Panc1 (cell line): ENCODE measurements at regions of chr1 and their contacts with region 1.

Region 1: GRCh38 chr1:225777583-225778336 is at the start of gene SRP9:
- DNase-seq: peak; percentile 96
- ATAC-seq: peak; percentile 100
- H3K4me3 ChIP-seq: peak within 1 kb of the TSS; percentile 92 to 98
- H3K27ac ChIP-seq: peak within 1 kb of the TSS; percentile 97
- H3K4me1 ChIP-seq: peaks cover 29% of the 10 kb centered on the region
- H3K27me3 ChIP-seq: no peaks in the 10 kb centered on the region
- CTCF ChIP-seq: peak; percentile 97
- total RNA-seq, gene SRP9: 282 TPM

Region 2: GRCh38 chr1:225554216-225554812 is 223.4 kb before region 1 on chr1:
- CTCF ChIA-PET with region 1: interaction called, 3 read pairs
- POLR2A ChIA-PET with region 1: no interaction called
- in situ Hi-C with region 1: loop called (anchors 10 kb)
- intact Hi-C with region 1: loop called (anchors 1 kb)
- DNase-seq: no peak
- ATAC-seq: no peak
- H3K4me3 ChIP-seq: no peak overlapping the region
- H3K27ac ChIP-seq: no peak overlapping the region
- H3K4me1 ChIP-seq: no peaks in the 10 kb centered on the region
- H3K27me3 ChIP-seq: no peaks in the 10 kb centered on the region
- CTCF ChIP-seq: peak; percentile 64; the same call in 1 of the 2 replicates

Region 3: DNA sequence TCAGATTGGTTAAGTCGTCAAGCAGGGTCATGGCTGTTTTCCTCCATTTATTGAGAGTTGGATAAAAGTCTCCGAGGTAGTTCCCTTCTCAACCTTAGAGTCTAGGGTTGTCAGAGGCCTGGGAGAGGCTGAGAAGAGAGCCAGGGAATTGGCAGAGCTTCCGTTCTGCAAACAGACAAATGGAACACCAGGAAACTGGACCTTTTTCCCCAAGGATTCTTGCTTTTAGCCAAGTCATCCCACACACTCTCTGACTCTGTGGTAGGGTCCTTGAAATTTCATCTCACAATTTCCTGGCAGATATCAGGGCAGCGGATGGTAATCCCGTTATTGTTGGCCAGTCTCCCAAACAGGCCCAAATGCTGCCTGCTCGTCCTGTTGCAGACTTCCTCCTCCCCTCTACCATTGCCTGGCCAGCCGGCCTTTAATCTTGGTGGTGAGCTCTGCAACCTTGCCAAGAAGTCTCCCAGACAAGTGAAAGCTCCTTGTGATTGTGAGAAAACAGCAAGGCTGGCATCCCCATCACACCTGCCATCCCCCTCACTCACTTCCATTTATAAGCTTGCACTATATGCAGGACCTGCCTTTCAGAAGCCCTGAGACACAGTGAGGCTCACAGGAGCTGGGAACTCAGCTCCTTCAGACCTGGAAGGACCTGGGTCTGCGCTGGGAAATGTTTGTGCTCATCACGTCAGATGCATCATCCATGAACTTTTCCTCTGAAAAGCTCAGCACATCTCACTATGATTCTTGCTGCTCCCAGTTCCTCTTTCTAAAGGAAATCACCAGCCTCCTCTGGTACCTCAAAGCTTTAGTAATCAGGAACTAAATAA is 13.8 kb before region 1 on chr1:
- CTCF ChIA-PET with region 1: no interaction called
- POLR2A ChIA-PET with region 1: interaction called, 12 read pairs
- in situ Hi-C with region 1: no loop called
- intact Hi-C with region 1: no loop called
- DNase-seq: no peak
- ATAC-seq: peak; percentile 27; the same call in 1 of the 2 replicates
- H3K4me3 ChIP-seq: no peak overlapping the region
- H3K27ac ChIP-seq: no peak overlapping the region
- H3K4me1 ChIP-seq: peaks cover 21% of the 10 kb centered on the region
- H3K27me3 ChIP-seq: no peaks in the 10 kb centered on the region
- CTCF ChIP-seq: no peak

Region 4: GRCh38 chr1:225845571-225846259 is 68.0 kb after region 1 on chr1:
- CTCF ChIA-PET with region 1: no interaction called
- POLR2A ChIA-PET with region 1: interaction called, 3 read pairs
- in situ Hi-C with region 1: no loop called
- intact Hi-C with region 1: loop called (anchors 5 kb)
- DNase-seq: peak; percentile 10
- ATAC-seq: peak; percentile 89
- H3K4me3 ChIP-seq: no peak overlapping the region
- H3K27ac ChIP-seq: no peak overlapping the region
- H3K4me1 ChIP-seq: 0 out of 2 replicates have a peak, but pooled peaks cover 5% of the 10 kb centered on the region
- H3K27me3 ChIP-seq: no peaks in the 10 kb centered on the region
- CTCF ChIP-seq: peak; percentile 88

Region 5: GRCh38 chr1:225919906-225920305 is 142.1 kb after region 1 on chr1:
- CTCF ChIA-PET with region 1: no interaction called
- POLR2A ChIA-PET with region 1: no interaction called
- in situ Hi-C with region 1: no loop called
- intact Hi-C with region 1: no loop called
- DNase-seq: no peak
- ATAC-seq: no peak
- H3K4me3 ChIP-seq: no peak overlapping the region
- H3K27ac ChIP-seq: 0 out of 2 replicates have a peak overlapping the region, but pooled peaks have one; percentile 23
- H3K4me1 ChIP-seq: peaks cover 13% of the 10 kb centered on the region
- H3K27me3 ChIP-seq: no peaks in the 10 kb centered on the region
- CTCF ChIP-seq: no peak

Region 6: DNA sequence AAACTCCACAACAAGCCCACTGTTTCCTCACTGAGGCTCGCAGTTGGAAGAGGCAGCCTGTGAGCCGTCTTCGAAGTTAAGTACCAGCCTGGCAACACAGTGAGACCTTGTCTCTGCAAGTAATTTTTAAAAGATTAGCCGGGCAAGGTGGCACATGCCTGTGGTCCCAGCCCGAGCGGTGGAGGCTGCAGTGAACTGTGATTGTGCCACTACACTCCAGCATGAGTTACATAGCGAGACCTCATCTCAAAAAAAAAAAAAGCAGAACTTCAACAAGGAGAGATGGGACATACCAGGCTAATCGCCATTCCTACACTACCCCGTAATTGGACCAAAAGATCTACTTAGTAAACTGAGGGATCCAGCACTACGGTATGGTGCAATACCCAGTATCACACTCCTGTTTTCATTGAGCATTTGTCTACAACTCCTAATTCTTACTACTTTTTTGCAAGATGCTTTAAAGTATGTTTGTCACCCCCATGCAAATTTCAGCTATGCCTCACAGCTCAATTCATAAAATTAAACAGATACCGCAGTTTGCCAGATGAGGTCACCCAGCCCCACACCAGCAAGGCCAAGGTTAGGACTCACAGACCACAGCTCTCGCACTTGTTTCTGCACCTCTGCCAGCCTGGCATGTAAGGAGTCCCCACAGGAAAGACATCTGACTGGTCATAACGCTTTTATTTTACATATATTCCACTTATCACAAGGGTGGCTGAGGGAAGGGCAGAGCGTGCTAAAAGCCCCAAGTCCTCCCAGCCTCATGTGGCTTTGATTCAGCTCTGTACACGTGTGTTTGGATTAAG is 200.4 kb after region 1 on chr1:
- CTCF ChIA-PET with region 1: interaction called, 4 read pairs
- POLR2A ChIA-PET with region 1: no interaction called
- in situ Hi-C with region 1: no loop called
- intact Hi-C with region 1: loop called (anchors 5 kb)
- DNase-seq: no peak
- ATAC-seq: no peak
- H3K4me3 ChIP-seq: no peak overlapping the region
- H3K27ac ChIP-seq: no peak overlapping the region
- H3K4me1 ChIP-seq: peaks cover 1% of the 10 kb centered on the region; the same call in 1 of the 2 replicates
- H3K27me3 ChIP-seq: no peaks in the 10 kb centered on the region
- CTCF ChIP-seq: no peak